Cardiac septum (tissue), 1 donor: ENCODE measurements at regions of chr11 and their contacts with region 1.

Region 1: GRCh38 chr11:35100013-35100383 is 39.0 kb upstream of the CD44 start:
- DNase-seq: no peak

Region 2: DNA sequence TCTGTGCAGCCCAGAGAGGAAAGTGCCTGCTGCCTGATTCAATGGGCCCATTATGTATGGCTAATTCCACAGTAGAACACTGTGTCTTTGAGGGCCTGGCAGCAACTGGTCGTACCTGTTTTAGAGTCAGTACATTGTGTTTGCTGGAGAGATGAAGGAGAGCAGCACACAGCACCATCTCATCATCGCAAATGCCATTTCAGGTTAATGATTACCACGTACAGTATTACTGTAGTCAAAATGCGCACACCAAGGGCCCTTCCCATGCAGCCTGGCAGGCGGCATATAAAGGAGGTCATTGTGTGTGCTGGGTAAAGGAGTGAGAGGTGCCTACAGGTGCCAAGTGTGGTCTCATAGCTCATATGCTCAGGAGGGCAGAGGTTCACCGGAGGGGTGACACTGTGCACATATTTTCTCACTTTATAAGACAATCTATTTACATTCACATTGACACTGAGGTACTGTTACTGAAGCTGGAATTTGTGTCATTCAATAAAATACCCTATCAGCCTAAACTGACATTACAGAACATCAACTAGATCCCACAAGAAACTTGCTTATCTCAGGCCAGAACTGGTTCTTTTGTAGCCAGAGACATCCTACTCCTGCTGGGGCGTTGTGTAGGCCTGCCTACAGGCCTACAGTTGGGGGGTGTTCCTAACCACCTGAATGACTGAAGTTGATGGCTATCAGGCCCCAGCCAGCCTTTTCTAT is 274.2 kb before region 1 on chr11:
- intact Hi-C with region 1: no loop called
- DNase-seq: no peak

Region 3: GRCh38 chr11:35030716-35031213 is 69.2 kb before region 1 on chr11:
- intact Hi-C with region 1: loop called (anchors 5 kb)
- DNase-seq: peak; percentile 85

Region 4: DNA sequence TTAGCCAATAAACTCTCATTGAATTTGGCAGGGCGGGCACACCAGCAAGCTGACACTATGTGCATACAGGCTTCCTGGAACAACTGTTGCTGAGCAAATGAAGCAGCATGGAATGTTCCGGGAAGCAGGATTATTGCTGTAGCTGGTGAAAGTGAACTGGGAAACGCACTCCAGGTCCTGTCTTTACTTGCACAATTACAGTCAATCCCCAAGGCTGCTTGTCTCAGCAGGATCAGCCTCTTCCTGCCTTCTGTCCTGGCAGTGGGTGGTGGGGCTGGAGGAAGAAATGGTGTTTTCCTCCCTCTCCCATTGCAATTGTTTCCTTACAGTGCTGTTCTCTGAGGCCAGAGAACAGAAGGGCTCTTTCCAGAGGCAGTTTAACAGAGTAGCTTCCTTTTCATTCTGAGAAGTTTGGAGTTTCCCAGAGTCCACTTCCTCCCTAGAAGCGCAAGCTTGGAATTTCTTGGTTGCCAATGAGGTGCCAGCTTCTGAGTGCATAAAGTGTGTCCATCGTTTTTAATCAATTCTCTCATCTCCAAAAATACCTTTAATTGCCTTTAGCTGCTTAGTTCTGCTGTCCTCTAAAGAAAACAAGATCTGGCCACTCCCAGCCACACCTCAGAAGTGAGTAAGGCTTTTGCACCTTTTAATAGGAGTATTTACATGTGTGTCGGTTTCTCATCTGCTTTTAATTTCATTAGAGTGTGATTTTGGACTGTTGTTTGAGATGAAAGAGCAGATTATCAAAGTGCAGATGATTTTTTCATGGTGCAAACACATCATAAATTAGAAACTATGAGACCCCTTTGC is 58.9 kb after region 1 on chr11:
- intact Hi-C with region 1: loop called (anchors 5 kb)
- DNase-seq: no peak